Prostate gland (tissue), 2 donors: ENCODE measurements at regions of chr1 and their contacts with region 1.

Region 1: DNA sequence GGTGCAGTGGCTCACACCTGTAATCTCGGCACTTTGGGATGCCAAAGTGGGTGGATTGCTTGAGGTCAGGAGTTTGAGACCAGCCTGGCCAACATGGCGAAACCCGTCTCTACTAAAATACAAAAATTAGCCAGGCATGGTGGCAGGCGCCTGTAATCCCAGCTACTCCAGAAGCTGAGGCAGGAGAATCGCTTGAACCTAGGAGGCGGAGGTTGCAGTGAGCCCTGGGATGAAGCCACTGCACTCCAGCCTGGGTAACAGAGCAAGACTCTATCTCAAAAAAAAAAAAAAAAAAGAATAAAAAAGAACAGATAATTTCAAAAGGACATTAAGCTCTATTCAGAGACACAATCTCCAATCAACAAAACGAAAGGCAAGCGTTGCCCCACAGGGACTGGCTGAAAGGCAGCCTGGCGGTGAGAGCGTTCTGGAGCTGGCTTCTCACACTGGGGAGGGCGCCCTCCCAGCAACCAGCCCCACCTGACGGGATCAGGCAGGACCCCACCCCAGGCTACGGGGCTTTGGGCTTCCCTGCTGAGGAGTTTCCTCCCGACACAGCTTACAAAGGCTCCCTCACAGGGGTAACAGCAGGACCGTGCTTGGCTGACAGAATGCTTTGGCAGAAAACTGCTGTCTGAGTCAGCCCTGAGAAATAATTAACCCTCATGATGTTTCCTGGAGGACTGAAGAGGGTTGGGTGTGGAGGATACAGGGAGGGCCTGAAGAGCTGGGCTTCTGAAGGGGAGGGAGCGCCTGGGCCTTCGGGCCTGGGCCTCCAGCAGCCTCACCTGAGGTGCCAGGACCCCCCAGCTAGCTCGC is 31.1 kb upstream of the SRP9 start:
- DNase-seq: peak; percentile 58
- H3K4me3 ChIP-seq: peak overlapping the region; percentile 13 to 21
- H3K27ac ChIP-seq: peak overlapping the region; percentile 78 to 85
- H3K4me1 ChIP-seq: no peaks in the 10 kb centered on the region
- H3K27me3 ChIP-seq: no peaks in the 10 kb centered on the region
- CTCF ChIP-seq: peak in 2 of 4 experiments; percentile 36 to 47
- POLR2A ChIP-seq: peak; percentile 55

Region 2: DNA sequence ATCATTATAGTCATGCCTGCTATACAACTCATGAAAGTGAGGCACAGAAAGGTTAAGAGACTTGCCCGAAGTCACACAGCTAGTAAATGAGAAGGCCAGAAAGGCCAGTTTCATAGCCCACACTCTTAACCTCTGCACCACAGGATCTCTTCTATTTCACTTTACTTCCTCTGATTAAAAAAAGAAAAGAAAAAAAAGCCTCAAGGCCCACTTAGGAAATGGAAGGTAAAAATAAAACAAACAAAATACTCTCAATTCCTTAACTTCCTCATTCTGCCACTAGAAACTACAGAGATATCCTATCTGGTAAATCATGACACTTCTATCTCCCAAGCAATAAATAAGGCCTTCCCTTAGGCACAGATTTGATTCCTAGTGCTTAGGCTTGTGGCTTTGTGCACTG is 86.0 kb before region 1 on chr1:
- intact Hi-C with region 1: loop called (anchors 5 kb)
- DNase-seq: no peak
- H3K4me3 ChIP-seq: no peak overlapping the region
- H3K27ac ChIP-seq: peak overlapping the region in 1 of 2 donors; percentile 1
- H3K4me1 ChIP-seq: no peaks in the 10 kb centered on the region
- H3K27me3 ChIP-seq: no peaks in the 10 kb centered on the region
- CTCF ChIP-seq: no peak
- POLR2A ChIP-seq: no peak

Region 3: DNA sequence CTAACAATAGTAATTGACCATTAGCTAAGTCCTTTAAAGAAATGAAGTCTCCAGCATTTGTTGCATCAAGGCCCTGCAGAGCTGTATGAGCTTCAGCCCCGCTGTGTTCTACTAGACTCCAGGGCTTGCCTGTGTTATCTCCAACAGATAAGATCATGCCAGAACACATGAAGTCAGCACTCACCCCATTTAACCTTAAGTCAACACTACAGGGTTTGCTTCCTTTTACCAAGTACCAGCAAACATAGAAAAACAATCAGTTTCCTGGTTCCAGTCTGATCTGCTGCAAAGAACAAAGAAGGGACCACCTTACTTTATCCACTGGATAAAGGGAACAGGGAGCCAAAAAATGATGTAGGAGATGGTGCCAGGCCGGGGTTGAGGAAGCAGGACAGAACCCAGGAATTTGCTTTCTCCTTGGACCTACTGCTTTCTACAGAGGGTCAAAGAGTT is 52.4 kb before region 1 on chr1:
- intact Hi-C with region 1: no loop called
- DNase-seq: peak; percentile 60
- H3K4me3 ChIP-seq: no peak overlapping the region
- H3K27ac ChIP-seq: peak overlapping the region; percentile 44 to 56
- H3K4me1 ChIP-seq: no peaks in the 10 kb centered on the region
- H3K27me3 ChIP-seq: no peaks in the 10 kb centered on the region
- CTCF ChIP-seq: no peak
- POLR2A ChIP-seq: no peak

Region 4: DNA sequence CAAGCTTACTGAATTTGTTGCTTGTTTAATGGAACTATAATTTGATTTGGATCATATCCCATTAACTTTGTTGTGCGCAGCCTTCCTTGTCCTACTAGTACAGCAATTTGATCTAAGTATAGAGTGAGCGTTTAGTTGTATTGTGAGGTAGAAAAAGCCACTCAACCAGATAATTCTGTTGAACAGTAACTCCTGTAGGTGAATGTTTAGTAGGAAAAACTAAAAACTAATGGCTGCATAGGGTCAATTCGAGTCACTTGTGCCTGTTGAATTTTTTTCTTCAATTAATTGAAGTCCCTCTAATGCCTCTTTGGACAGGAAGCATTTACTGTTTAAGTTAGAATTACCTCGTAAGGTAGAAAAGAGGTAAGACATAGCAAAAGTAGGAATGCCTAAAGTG is 48.4 kb after region 1 on chr1:
- intact Hi-C with region 1: no loop called
- DNase-seq: no peak
- H3K4me3 ChIP-seq: no peak overlapping the region
- H3K27ac ChIP-seq: no peak overlapping the region
- H3K4me1 ChIP-seq: no peaks in the 10 kb centered on the region
- H3K27me3 ChIP-seq: no peaks in the 10 kb centered on the region
- CTCF ChIP-seq: no peak
- POLR2A ChIP-seq: no peak